Activated CD8-positive, alpha-beta T cell treated with anti-CD3 and anti-CD28 coated beads, Interleukin-2, amount 10 ng/mL, durations not matched to agents 7 days and 5 days (primary cell): ENCODE measurements at regions of chr17 and their contacts with region 1.

Region 1: GRCh38 chr17:45317112-45317928 is 500 bp upstream of the MAP3K14 start:
- DNase-seq: peak; percentile 100
- ATAC-seq: peak; percentile 90
- H3K4me3 Mint-ChIP-seq: peak overlapping the region; percentile 83
- H3K27ac Mint-ChIP-seq: peak overlapping the region; percentile 93
- H3K4me1 Mint-ChIP-seq: peaks cover 73% of the 10 kb centered on the region
- H3K27me3 Mint-ChIP-seq: no peaks in the 10 kb centered on the region

Region 2: DNA sequence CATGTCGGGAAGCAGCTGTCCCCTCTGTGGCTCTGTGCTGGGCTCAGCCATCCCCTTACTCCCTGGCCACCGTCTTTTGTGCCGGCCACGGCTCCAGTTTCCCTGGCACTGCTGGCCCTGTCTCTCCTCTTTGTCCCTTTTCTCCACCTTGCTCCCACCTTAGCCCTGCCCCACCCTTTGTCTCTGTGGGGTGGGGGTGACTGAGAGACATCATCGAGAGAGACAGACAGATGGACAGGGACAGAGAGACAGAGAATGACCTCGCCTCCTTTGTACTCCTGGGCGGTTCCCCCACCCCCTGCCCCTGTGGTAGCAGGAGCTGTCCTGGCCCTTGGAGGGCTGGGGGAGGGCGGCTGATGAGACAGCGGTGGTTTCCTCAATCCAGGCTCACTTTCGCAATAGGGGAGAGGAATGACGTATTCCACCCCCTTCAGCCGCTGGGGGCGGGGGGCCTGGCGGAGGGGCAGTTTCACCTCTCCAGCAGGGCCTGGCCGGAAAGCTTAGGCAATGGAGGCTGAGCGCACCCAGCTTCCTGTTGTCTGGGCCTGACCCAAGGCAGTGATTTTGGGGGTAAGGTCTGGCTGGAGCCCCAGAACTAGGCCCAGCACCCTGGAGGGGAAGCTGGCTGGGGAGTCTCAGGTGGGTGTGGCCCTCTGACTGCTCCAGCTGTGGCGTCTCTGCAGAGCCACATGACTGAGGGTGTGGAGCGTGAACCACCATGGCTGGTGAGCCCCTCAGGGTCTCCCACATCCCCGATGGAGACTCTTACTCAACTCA is 88.4 kb before region 1 on chr17:
- CTCF ChIA-PET with region 1: interaction called, 4 read pairs
- POLR2A ChIA-PET with region 1: interaction called, 71 read pairs
- DNase-seq: peak; percentile 83
- ATAC-seq: peak; percentile 41
- H3K4me3 Mint-ChIP-seq: peak overlapping the region; percentile 100
- H3K27ac Mint-ChIP-seq: peak overlapping the region; percentile 94
- H3K4me1 Mint-ChIP-seq: peaks cover 93% of the 10 kb centered on the region
- H3K27me3 Mint-ChIP-seq: no peaks in the 10 kb centered on the region

Region 3: GRCh38 chr17:45247429-45248131 is 69.7 kb before region 1 on chr17:
- CTCF ChIA-PET with region 1: interaction called, 4 read pairs
- POLR2A ChIA-PET with region 1: interaction called, 21 read pairs
- DNase-seq: peak; percentile 99
- ATAC-seq: peak; percentile 92
- H3K4me3 Mint-ChIP-seq: peak overlapping the region; percentile 91
- H3K27ac Mint-ChIP-seq: peak overlapping the region; percentile 97
- H3K4me1 Mint-ChIP-seq: peaks cover 75% of the 10 kb centered on the region
- H3K27me3 Mint-ChIP-seq: no peaks in the 10 kb centered on the region

Region 4: GRCh38 chr17:45293413-45294211 is 23.7 kb before region 1 on chr17:
- CTCF ChIA-PET with region 1: interaction called, 17 read pairs
- POLR2A ChIA-PET with region 1: interaction called, 20 read pairs
- DNase-seq: no peak
- ATAC-seq: no peak
- H3K4me3 Mint-ChIP-seq: no peak overlapping the region
- H3K27ac Mint-ChIP-seq: peak overlapping the region; percentile 67
- H3K4me1 Mint-ChIP-seq: peaks cover 88% of the 10 kb centered on the region
- H3K27me3 Mint-ChIP-seq: no peaks in the 10 kb centered on the region

Region 5: DNA sequence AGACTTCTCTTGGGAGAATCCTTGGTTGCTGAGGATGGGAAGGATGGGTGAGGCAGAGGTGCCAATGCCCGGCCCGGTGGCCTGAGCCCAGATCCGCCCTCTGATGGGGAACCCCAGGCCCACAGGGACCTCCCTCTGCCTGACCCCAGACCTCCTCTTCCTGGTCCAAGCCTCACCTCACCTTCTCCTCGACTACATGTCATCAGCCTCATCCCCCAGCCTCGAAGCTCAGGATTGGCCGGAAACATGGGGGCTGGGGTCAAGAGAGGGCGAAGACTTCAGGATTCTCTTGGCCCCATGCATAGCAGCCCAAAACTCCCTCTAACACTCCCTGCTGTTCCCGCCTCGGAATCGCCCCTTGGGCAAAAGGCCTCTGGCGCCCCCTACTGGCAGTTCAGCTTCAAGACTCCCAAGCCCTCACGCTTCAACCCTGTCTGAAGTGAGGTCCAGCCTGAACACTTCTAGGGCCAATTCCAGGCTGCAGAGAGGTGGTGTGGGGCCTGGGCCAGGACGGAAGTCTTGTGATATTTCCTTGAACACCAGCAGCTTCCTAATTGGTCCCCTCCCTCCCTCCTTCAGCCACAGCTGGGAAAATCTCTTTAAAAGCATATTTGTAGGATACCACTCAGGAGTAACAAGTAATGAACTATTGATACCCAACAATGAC is 68.1 kb after region 1 on chr17:
- CTCF ChIA-PET with region 1: interaction called, 22 read pairs
- POLR2A ChIA-PET with region 1: interaction called, 4 read pairs
- DNase-seq: peak; percentile 93
- ATAC-seq: peak; percentile 95
- H3K4me3 Mint-ChIP-seq: no peak overlapping the region
- H3K27ac Mint-ChIP-seq: peak overlapping the region; percentile 74
- H3K4me1 Mint-ChIP-seq: peaks cover 33% of the 10 kb centered on the region
- H3K27me3 Mint-ChIP-seq: peaks cover 5% of the 10 kb centered on the region